A673 (cell line): ENCODE measurements at regions of chr1 and their contacts with region 1.

Region 1: GRCh38 chr1:96565546-96565945 is 156.0 kb upstream of the PTBP2 start:
- DNase-seq: no peak
- H3K4me3 ChIP-seq: no peak overlapping the region
- H3K27ac ChIP-seq: no peak overlapping the region
- H3K4me1 ChIP-seq: no peaks in the 10 kb centered on the region
- H3K27me3 ChIP-seq: no peaks in the 10 kb centered on the region
- CTCF ChIP-seq: no peak

Region 2: DNA sequence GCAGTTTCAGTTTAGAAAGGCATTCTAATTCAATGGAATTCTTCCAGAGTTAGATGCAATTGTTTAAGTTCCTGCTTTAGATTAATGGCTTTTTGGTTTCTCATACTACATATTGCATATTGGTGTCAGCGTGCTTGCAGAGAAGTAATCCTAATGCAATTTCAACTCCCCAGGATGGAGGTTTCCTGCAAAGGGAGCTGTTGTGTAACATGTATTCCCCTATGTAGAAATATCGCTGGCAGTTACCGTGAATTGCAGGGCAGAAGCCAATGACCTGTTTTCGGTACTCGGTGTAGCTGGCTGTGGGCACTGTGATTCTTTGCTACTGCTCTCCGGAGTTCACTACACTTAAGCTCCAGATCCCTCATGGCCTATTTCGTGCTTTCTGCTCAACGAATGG is 100.1 kb before region 1 on chr1:
- CTCF ChIA-PET with region 1: no interaction called
- POLR2A ChIA-PET with region 1: no interaction called
- intact Hi-C with region 1: no loop called
- DNase-seq: peak; percentile 7
- H3K4me3 ChIP-seq: no peak overlapping the region
- H3K27ac ChIP-seq: no peak overlapping the region
- H3K4me1 ChIP-seq: no peaks in the 10 kb centered on the region
- H3K27me3 ChIP-seq: no peaks in the 10 kb centered on the region
- CTCF ChIP-seq: no peak

Region 3: DNA sequence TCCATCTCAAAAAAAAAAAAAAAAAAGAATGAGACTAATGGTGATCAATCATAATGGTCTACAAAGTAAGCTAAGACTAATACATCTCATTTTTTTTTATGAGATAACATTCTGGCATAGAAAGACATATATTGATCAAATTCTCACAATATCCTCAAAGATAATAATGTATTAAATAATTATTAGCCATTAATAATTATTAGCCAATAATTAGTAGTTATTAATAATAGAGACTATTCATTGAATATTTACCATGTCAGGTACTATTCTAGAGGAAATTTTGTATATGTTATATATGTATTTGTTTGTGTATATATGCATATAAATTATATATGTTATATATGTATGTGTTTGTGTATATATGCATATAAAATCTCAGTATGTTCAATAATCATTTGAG is 18.4 kb after region 1 on chr1:
- CTCF ChIA-PET with region 1: no interaction called
- POLR2A ChIA-PET with region 1: interaction called, 10 read pairs
- intact Hi-C with region 1: no loop called
- DNase-seq: no peak
- H3K4me3 ChIP-seq: no peak overlapping the region
- H3K27ac ChIP-seq: no peak overlapping the region
- H3K4me1 ChIP-seq: no peaks in the 10 kb centered on the region
- H3K27me3 ChIP-seq: peaks cover 8% of the 10 kb centered on the region
- CTCF ChIP-seq: no peak